Right lobe of liver (tissue), 6 donors: ENCODE measurements at regions of chr1 and their contacts with region 1.

Region 1: DNA sequence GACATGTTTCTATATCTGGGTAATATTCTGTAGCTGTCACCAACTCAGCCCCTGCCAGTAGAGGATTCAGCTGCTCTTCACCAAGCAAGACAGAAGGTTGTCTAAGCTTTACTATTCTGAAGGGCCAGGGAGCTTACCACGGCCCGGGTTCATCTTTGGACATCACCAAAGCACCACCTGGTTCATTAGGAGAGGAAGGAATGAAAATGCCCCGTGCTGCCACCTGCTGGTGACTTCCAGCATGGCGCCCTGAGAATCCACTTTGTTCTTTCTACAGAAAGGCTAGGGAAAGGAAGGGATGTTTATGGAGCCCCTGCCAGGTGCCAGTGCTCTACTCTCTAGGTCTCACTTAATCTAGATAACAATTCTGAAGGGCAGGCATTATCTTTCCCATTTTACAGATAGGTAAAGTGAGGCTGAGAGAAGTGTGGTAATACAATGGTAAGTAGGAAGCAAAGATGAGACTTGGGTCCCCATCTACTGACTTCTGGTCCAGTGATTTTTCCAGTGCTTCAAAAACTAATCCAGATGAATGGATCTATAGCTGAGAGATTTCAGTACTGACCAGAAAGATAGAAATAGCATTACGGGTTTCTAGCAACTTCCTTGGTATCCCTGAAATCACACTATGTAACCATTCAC is 79.5 kb downstream of the BEND5 start:
- DNase-seq: peak; percentile 63 to 77 (median 67)
- ATAC-seq: peak; percentile 75 to 92 (median 86)
- H3K4me3 ChIP-seq: no peak overlapping the region
- H3K27ac ChIP-seq: no peak overlapping the region
- H3K4me1 ChIP-seq: peaks cover 0 to 6% (median 0%) of the 10 kb centered on the region in 4 donors
- H3K27me3 ChIP-seq: no peaks in the 10 kb centered on the region
- CTCF ChIP-seq: peak; percentile 82 to 98 (median 96)
- POLR2A ChIP-seq: no peak

Region 2: GRCh38 chr1:48572646-48573261 is 124.4 kb before region 1 on chr1:
- intact Hi-C with region 1: loop called (anchors 5 to 10 kb)
- DNase-seq: peak; percentile 41 to 60 (median 56)
- ATAC-seq: peak; percentile 73 to 81 (median 78)
- H3K4me3 ChIP-seq: no peak overlapping the region
- H3K27ac ChIP-seq: no peak overlapping the region
- H3K4me1 ChIP-seq: no peaks in the 10 kb centered on the region
- H3K27me3 ChIP-seq: no peaks in the 10 kb centered on the region
- CTCF ChIP-seq: peak; percentile 62 to 66 (median 64)
- POLR2A ChIP-seq: no peak

Region 3: GRCh38 chr1:48773133-48773532 is 75.9 kb after region 1 on chr1:
- intact Hi-C with region 1: no loop called
- DNase-seq: no peak
- ATAC-seq: no peak
- H3K4me3 ChIP-seq: no peak overlapping the region
- H3K27ac ChIP-seq: no peak overlapping the region
- H3K4me1 ChIP-seq: peaks cover 0 to 5% (median 0%) of the 10 kb centered on the region in 4 donors
- H3K27me3 ChIP-seq: no peaks in the 10 kb centered on the region
- CTCF ChIP-seq: no peak
- POLR2A ChIP-seq: no peak